Natural killer cell (primary cell): ENCODE measurements at regions of chr9 and their contacts with region 1.

Region 1: DNA sequence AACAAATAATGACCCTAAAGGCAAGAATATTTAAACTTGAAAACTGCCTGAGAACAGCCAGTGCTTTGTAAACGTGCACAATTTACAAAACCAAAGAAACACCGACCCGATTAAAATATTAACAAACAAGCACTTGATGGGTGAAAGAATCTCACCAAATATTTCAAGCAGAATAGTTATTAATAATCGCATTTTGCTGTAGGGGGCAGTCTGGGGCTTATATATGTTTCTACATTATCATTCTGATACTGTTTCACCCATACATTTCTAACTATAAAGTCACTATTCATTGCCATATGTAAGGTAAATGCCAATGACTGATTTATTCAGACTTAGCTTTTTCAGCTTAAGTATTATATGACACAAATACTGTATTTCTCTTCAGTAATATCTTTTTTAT is 37.7 kb downstream of the UBAP2 start:
- DNase-seq: peak in 1 of 2 donors; percentile 53
- ATAC-seq: no peak
- H3K4me3 ChIP-seq: no peak overlapping the region
- H3K4me3 Mint-ChIP-seq: no peak overlapping the region
- H3K27ac ChIP-seq: no peak overlapping the region
- H3K27ac Mint-ChIP-seq: no peak overlapping the region
- H3K4me1 ChIP-seq: no peaks in the 10 kb centered on the region
- H3K4me1 Mint-ChIP-seq: peaks cover 0 to 4% of the 10 kb centered on the region in 2 donors
- H3K27me3 ChIP-seq: no peaks in the 10 kb centered on the region
- H3K27me3 Mint-ChIP-seq: no peaks in the 10 kb centered on the region
- CTCF ChIP-seq: peak; percentile 55

Region 2: GRCh38 chr9:33249087-33249657 is 761.8 kb before region 1 on chr9:
- intact Hi-C with region 1: no loop called
- DNase-seq: no peak
- ATAC-seq: no peak
- H3K4me3 ChIP-seq: no peak overlapping the region
- H3K4me3 Mint-ChIP-seq: no peak overlapping the region
- H3K27ac ChIP-seq: no peak overlapping the region
- H3K27ac Mint-ChIP-seq: no peak overlapping the region
- H3K4me1 ChIP-seq: peaks cover 4% of the 10 kb centered on the region
- H3K4me1 Mint-ChIP-seq: no peaks in the 10 kb centered on the region
- H3K27me3 ChIP-seq: no peaks in the 10 kb centered on the region
- H3K27me3 Mint-ChIP-seq: no peaks in the 10 kb centered on the region
- CTCF ChIP-seq: no peak

Region 3: GRCh38 chr9:34072868-34073590 is 62.0 kb after region 1 on chr9:
- intact Hi-C with region 1: loop called (anchors 1 kb)
- DNase-seq: no peak
- ATAC-seq: no peak
- H3K4me3 ChIP-seq: no peak overlapping the region
- H3K4me3 Mint-ChIP-seq: no peak overlapping the region
- H3K27ac ChIP-seq: no peak overlapping the region
- H3K27ac Mint-ChIP-seq: no peak overlapping the region
- H3K4me1 ChIP-seq: peaks cover 10% of the 10 kb centered on the region
- H3K4me1 Mint-ChIP-seq: peaks cover 5 to 20% of the 10 kb centered on the region in 2 donors
- H3K27me3 ChIP-seq: no peaks in the 10 kb centered on the region
- H3K27me3 Mint-ChIP-seq: no peaks in the 10 kb centered on the region
- CTCF ChIP-seq: no peak

Region 4: GRCh38 chr9:34252670-34253459 is 241.9 kb after region 1 on chr9:
- intact Hi-C with region 1: loop called (anchors 1 kb)
- DNase-seq: peak; percentile 66 to 82
- ATAC-seq: peak; percentile 75 to 91 (median 77)
- H3K4me3 ChIP-seq: no peak overlapping the region
- H3K4me3 Mint-ChIP-seq: no peak overlapping the region
- H3K27ac ChIP-seq: no peak overlapping the region
- H3K27ac Mint-ChIP-seq: peak overlapping the region; percentile 43 to 62
- H3K4me1 ChIP-seq: peaks cover 6% of the 10 kb centered on the region
- H3K4me1 Mint-ChIP-seq: no peaks in the 10 kb centered on the region
- H3K27me3 ChIP-seq: no peaks in the 10 kb centered on the region
- H3K27me3 Mint-ChIP-seq: no peaks in the 10 kb centered on the region
- CTCF ChIP-seq: peak; percentile 96